ENCODE measurements at regions of chr19 and their contacts with region 1.

Region 1: GRCh38 chr19:41959056-41960053 is at the start of gene RABAC1:
- DNase-seq: peak; percentile 91
- ATAC-seq: peak; percentile 87
- H3K4me3 ChIP-seq: peak within 1 kb of the TSS; percentile 88
- H3K27ac ChIP-seq: peak within 1 kb of the TSS; percentile 79
- H3K4me1 ChIP-seq: peaks cover 6% of the 10 kb centered on the region
- H3K27me3 ChIP-seq: no peaks in the 10 kb centered on the region
- CTCF ChIP-seq: no peak; the same call in 1 of the 2 replicates
- POLR2A ChIP-seq: peak; percentile 93
- RAD21 ChIP-seq: 0 out of 2 replicates have a peak, but pooled peaks have one; percentile 5
- total RNA-seq, gene RABAC1: 117 and 145 TPM in 2 replicates

Region 2: GRCh38 chr19:41795031-41795461 is 164.3 kb before region 1 on chr19:
- CTCF ChIA-PET with region 1: no interaction called
- POLR2A ChIA-PET with region 1: no interaction called
- dilution Hi-C with region 1: no loop called
- in situ Hi-C with region 1: no loop called
- intact Hi-C with region 1: loop called (anchors 10 kb)
- DNase-seq: peak; percentile 16
- ATAC-seq: peak; percentile 97
- H3K4me3 ChIP-seq: no peak overlapping the region
- H3K27ac ChIP-seq: no peak overlapping the region
- H3K4me1 ChIP-seq: no peaks in the 10 kb centered on the region
- H3K27me3 ChIP-seq: peaks cover 3% of the 10 kb centered on the region
- CTCF ChIP-seq: peak; percentile 56
- POLR2A ChIP-seq: no peak
- RAD21 ChIP-seq: no peak

Region 3: DNA sequence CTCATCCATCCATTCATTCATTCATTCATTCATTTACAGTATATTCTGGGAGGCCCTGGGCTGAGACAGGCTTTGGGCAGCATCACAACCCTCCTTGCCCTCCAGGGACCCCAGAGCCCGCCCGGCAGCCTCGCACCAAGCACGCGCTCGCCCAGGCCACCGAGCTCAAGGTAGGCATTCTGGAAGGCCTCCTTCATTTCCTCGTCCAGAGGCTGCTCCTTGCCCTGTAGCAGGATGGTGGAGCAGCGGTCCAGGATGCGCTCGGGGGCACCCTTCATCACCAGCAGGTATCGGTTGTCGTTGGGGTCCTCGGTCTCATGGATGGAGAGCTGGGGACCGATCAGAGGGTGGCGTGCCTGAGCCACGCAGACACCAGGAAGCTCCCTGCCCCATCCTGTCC is 19.1 kb after region 1 on chr19:
- CTCF ChIA-PET with region 1: no interaction called
- POLR2A ChIA-PET with region 1: no interaction called
- dilution Hi-C with region 1: no loop called
- in situ Hi-C with region 1: no loop called
- intact Hi-C with region 1: no loop called
- DNase-seq: no peak
- ATAC-seq: no peak
- H3K4me3 ChIP-seq: no peak overlapping the region
- H3K27ac ChIP-seq: no peak overlapping the region
- H3K4me1 ChIP-seq: no peaks in the 10 kb centered on the region
- H3K27me3 ChIP-seq: peaks cover 28% of the 10 kb centered on the region
- CTCF ChIP-seq: no peak
- POLR2A ChIP-seq: no peak
- RAD21 ChIP-seq: no peak

Region 4: GRCh38 chr19:42023121-42023942 is 64.0 kb after region 1 on chr19:
- CTCF ChIA-PET with region 1: no interaction called
- POLR2A ChIA-PET with region 1: no interaction called
- dilution Hi-C with region 1: no loop called
- in situ Hi-C with region 1: no loop called
- intact Hi-C with region 1: no loop called
- DNase-seq: peak; percentile 8
- ATAC-seq: peak; percentile 21; the same call in 1 of the 2 replicates
- H3K4me3 ChIP-seq: no peak overlapping the region
- H3K27ac ChIP-seq: no peak overlapping the region
- H3K4me1 ChIP-seq: peaks cover 16% of the 10 kb centered on the region
- H3K27me3 ChIP-seq: peaks cover 9% of the 10 kb centered on the region; the same call in 1 of the 2 replicates
- CTCF ChIP-seq: peak; percentile 29
- POLR2A ChIP-seq: no peak
- RAD21 ChIP-seq: peak; percentile 17; the same call in 1 of the 2 replicates

Measured in IMR-90 (cell line).